Posterior cingulate gyrus (tissue), 11 donors: ENCODE measurements at regions of chr15 and their contacts with region 1.

Region 1: DNA sequence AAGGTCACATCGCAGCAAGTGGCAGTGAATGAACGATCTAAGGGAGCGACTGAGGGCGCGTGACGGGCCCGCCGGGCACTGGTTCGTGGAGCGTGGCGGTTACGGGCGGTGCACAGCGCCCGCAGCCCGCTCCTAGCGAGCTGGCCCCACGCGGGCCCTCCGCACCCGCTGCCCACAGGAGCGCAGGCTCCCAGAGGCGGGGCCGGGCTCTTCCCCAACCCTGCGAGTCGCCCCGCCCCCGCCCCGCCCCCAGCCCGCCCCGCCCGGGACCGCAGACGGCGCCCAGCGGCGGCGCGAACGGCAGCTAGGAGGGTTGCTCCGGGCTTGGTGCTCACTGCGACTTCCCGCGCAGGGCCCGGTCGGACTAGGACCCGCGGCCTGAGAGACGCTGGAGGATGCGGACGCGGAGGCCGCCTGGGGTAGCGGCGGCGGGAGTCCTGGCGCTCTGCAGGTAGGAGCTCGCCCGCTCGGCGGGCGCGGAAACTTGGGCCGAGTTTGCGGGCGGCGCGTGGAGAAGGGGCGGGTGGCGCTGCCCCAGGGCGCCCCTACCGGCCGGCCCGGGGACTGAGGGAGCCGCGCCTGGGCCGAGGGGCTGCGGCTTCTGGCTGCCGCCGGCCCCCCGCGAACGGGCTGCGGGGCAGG is at the start of gene C15orf39:
- DNase-seq: peak; percentile 37 to 94 (median 55)

Region 2: DNA sequence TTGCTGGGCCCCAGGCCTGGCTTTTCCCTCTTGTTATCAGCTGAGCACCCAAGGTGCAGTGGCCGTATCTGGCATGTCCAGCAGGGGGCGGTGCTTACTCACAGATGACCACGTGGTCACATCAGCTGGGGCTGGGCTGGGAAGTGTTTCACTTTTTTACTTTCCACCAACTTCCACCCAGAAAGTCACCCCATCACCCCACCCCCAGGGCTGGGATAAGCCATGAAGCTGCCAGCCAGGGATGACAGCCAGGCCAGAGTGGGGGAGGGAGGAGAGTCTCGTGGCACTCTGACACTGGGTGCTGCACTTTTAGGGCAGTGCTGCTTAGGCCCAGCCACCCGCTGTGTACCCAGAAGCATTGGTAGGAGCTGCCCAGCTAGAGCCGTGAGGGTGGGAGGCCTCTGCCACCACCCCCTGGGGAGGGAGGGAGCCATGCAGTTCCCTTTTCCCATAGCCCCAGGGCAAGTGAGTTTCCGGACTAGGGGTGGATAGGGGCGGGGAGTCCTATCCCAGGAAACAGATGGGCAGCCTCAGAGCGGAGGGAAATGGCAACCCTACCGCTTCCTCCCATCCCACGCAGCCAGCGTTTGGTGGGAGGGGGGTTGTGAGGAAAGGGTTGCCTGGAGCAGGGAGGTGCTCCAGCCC is 172.2 kb before region 1 on chr15:
- intact Hi-C with region 1: loop called (anchors 1 kb)
- DNase-seq: peak; percentile 80 to 99 (median 94)

Region 3: GRCh38 chr15:75042730-75043508 is 158.8 kb before region 1 on chr15:
- intact Hi-C with region 1: loop called (anchors 5 kb)
- DNase-seq: peak in 9 of 10 donors; percentile 38 to 94 (median 62)

Region 4: GRCh38 chr15:75182187-75183131 is 19.3 kb before region 1 on chr15:
- intact Hi-C with region 1: no loop called
- DNase-seq: peak in 2 of 10 donors; percentile 57 to 62

Region 5: GRCh38 chr15:75347222-75347878 is 145.6 kb after region 1 on chr15:
- intact Hi-C with region 1: loop called (anchors 10 kb)
- DNase-seq: peak; percentile 67 to 96 (median 80)